ENCODE measurements at regions of chr17 and their contacts with region 1.

Region 1: GRCh38 chr17:67942810-67943209 is 53.5 kb downstream of the C17orf58 start:
- DNase-seq: no peak
- ATAC-seq: no peak
- H3K4me3 ChIP-seq: no peak overlapping the region
- H3K4me3 Mint-ChIP-seq: no peak overlapping the region
- H3K27ac ChIP-seq: no peak overlapping the region
- H3K27ac Mint-ChIP-seq: no peak overlapping the region
- H3K4me1 ChIP-seq: no peaks in the 10 kb centered on the region
- H3K4me1 Mint-ChIP-seq: no peaks in the 10 kb centered on the region
- H3K27me3 ChIP-seq: no peaks in the 10 kb centered on the region
- H3K27me3 Mint-ChIP-seq: no peaks in the 10 kb centered on the region
- CTCF ChIP-seq: peak; percentile 42

Region 2: GRCh38 chr17:67879662-67880061 is 63.1 kb before region 1 on chr17:
- CTCF ChIA-PET with region 1: no interaction called
- POLR2A ChIA-PET with region 1: no interaction called
- intact Hi-C with region 1: loop called (anchors 10 kb)
- DNase-seq: no peak
- ATAC-seq: no peak
- H3K4me3 ChIP-seq: no peak overlapping the region
- H3K4me3 Mint-ChIP-seq: no peak overlapping the region
- H3K27ac ChIP-seq: no peak overlapping the region
- H3K27ac Mint-ChIP-seq: no peak overlapping the region
- H3K4me1 ChIP-seq: no peaks in the 10 kb centered on the region
- H3K4me1 Mint-ChIP-seq: peaks cover 2% of the 10 kb centered on the region
- H3K27me3 ChIP-seq: no peaks in the 10 kb centered on the region
- H3K27me3 Mint-ChIP-seq: no peaks in the 10 kb centered on the region
- CTCF ChIP-seq: no peak

Region 3: DNA sequence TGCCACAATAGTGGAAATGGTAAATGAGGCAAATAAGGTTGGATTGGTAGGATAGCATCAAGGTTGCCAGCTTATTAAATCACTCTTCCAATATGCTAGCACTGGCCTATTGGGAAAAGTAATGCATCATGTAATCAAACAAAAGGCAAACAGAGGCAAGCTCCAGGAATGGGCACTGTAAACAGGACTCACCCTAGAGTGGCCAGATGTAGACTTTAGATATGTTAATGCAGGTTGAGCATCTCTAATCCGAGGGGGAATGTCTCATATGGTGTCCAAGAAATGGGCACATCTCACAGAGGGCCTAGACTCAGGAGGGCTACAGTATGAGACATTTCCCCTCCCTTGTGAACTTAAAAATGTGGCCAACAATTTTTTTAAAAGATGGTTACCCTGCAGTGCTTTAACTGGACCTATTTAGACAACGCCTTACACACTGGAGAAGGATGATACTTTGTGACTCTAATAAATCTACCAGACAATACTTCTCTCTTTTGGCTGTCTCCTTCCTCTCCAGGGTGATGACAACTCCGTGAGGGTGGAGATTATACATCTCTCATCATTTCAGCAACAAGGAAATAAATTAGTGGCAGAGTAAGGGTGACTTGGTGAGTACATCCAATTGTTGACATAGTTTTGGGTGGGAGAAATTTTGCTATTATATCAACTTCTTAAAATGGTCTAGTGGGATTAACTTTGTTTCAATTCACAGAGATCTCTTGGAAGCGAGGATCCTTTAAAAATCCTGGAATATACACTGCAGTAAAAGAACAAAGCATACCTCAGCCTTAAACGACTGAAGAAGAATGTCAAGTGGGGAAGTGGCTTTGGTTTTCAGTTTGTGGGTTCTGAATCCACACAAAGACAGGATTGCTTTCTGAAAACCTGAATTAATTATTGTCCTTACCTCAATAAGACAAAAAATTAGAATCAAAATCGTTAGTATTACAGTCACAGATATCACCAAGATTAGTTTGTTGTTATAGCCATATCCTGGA is 182.4 kb after region 1 on chr17:
- CTCF ChIA-PET with region 1: no interaction called
- POLR2A ChIA-PET with region 1: no interaction called
- intact Hi-C with region 1: no loop called
- DNase-seq: no peak
- ATAC-seq: no peak
- H3K4me3 ChIP-seq: no peak overlapping the region
- H3K4me3 Mint-ChIP-seq: no peak overlapping the region
- H3K27ac ChIP-seq: no peak overlapping the region
- H3K27ac Mint-ChIP-seq: no peak overlapping the region
- H3K4me1 ChIP-seq: no peaks in the 10 kb centered on the region
- H3K4me1 Mint-ChIP-seq: no peaks in the 10 kb centered on the region
- H3K27me3 ChIP-seq: no peaks in the 10 kb centered on the region
- H3K27me3 Mint-ChIP-seq: no peaks in the 10 kb centered on the region
- CTCF ChIP-seq: no peak

Measured in B cell (primary cell).